Activated T-helper 1 cell treated with anti-CD3 and anti-CD28 coated beads, Interleukin-12 subunit alpha, Interleukin-12 subunit beta, Interleukin-2, Interleukin-4 antibody, amounts not matched to agents 30 ng/mL and 10 ng/mL and 1 ng/mL, durations not matched to agents 14 hours and 24 hours and 36 hours (primary cell): ENCODE measurements at regions of chr10 and their contacts with region 1.

Region 1: DNA sequence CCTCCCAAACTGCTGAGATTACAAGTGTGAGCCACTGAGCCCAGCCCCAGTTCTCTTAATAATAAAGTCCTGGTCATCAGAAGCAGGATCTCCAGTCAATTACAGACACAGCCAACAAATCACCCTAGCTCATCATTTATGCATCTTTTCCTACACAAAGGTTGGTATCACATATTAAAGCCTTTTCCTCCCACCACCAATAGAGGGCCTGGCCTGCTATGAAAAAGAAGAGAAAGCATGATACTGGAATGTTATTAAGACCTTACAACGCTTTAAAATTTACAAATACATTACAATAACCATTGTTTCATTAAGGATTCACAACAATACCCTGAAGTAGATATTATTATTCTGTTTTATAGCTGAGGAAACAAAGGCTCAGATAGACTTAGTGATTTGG is 25.9 kb downstream of the VAX1 start:
- DNase-seq: no peak
- H3K4me3 Mint-ChIP-seq: no peak overlapping the region
- H3K27ac Mint-ChIP-seq: no peak overlapping the region
- H3K4me1 Mint-ChIP-seq: no peaks in the 10 kb centered on the region
- H3K27me3 Mint-ChIP-seq: peaks cover 6% of the 10 kb centered on the region

Region 2: GRCh38 chr10:116796910-116797513 is 315.2 kb before region 1 on chr10:
- intact Hi-C with region 1: loop called (anchors 5 kb)
- DNase-seq: peak; percentile 25
- H3K4me3 Mint-ChIP-seq: no peak overlapping the region
- H3K27ac Mint-ChIP-seq: no peak overlapping the region
- H3K4me1 Mint-ChIP-seq: no peaks in the 10 kb centered on the region
- H3K27me3 Mint-ChIP-seq: peaks cover 13% of the 10 kb centered on the region

Region 3: DNA sequence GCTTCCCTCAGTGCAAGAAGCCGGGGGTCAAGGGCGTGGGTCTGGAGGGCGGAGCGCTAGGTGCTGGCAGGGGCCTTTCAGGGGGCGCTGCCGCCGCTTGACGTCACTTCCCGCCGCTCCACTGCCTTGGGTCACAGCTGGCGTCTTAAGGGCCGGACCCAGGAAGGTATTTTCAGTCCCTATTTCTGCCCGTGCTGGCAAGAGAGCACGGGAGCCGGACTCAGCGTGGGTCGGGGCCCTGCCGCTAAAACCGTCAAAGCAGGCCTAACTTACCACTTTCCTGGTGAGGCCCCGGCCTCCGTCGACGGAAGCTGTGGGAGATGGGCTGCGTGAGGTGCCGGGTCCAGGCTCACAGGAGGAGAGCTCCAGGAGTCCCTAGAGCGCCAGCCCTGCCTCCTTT is 13.8 kb after region 1 on chr10:
- intact Hi-C with region 1: no loop called
- DNase-seq: no peak
- H3K4me3 Mint-ChIP-seq: no peak overlapping the region
- H3K27ac Mint-ChIP-seq: no peak overlapping the region
- H3K4me1 Mint-ChIP-seq: no peaks in the 10 kb centered on the region
- H3K27me3 Mint-ChIP-seq: peaks cover 28% of the 10 kb centered on the region

Region 4: GRCh38 chr10:117472872-117473271 is 360.7 kb after region 1 on chr10:
- intact Hi-C with region 1: no loop called
- DNase-seq: no peak
- H3K4me3 Mint-ChIP-seq: no peak overlapping the region
- H3K27ac Mint-ChIP-seq: no peak overlapping the region
- H3K4me1 Mint-ChIP-seq: no peaks in the 10 kb centered on the region
- H3K27me3 Mint-ChIP-seq: peaks cover 4% of the 10 kb centered on the region